PC-9 (cell line): ENCODE measurements at regions of chr2 and their contacts with region 1.

Region 1: GRCh38 chr2:195984923-195985726 is 83.5 kb downstream of the DNAH7 start:
- DNase-seq: no peak
- H3K4me3 ChIP-seq: no peak overlapping the region
- H3K27ac ChIP-seq: no peak overlapping the region
- H3K4me1 ChIP-seq: no peaks in the 10 kb centered on the region
- H3K27me3 ChIP-seq: no peaks in the 10 kb centered on the region
- CTCF ChIP-seq: no peak

Region 2: GRCh38 chr2:194385376-194385775 is 1599.7 kb before region 1 on chr2:
- CTCF ChIA-PET with region 1: no interaction called
- POLR2A ChIA-PET with region 1: interaction called, 14 read pairs
- intact Hi-C with region 1: no loop called
- DNase-seq: no peak
- H3K4me3 ChIP-seq: no peak overlapping the region
- H3K27ac ChIP-seq: no peak overlapping the region
- H3K4me1 ChIP-seq: no peaks in the 10 kb centered on the region
- H3K27me3 ChIP-seq: no peaks in the 10 kb centered on the region
- CTCF ChIP-seq: no peak

Region 3: GRCh38 chr2:195945061-195945460 is 40.1 kb before region 1 on chr2:
- CTCF ChIA-PET with region 1: no interaction called
- POLR2A ChIA-PET with region 1: no interaction called
- intact Hi-C with region 1: no loop called
- DNase-seq: no peak
- H3K4me3 ChIP-seq: no peak overlapping the region
- H3K27ac ChIP-seq: no peak overlapping the region
- H3K4me1 ChIP-seq: no peaks in the 10 kb centered on the region
- H3K27me3 ChIP-seq: no peaks in the 10 kb centered on the region
- CTCF ChIP-seq: no peak